Left ventricle myocardium inferior (tissue), 1 donor: ENCODE measurements at regions of chr2 and their contacts with region 1.

Region 1: DNA sequence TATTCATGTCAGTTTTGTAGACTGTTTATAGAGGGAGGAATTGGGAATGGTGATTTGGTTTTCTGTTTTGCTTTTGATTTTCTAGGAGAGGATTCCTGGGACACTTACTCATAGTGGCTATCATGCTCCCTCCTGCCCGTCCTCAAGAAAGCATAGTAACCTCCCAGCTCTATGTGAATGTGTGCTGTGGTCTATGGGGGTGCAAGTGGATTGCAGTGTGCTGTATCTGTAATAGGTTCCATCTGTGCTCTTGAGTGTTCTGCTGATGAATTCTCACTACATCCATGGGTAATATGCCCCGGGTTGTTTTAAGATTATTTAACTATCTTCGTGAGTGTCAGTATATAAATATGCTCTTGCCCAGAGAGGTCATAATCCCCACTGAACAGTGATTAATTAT is 811.3 kb downstream of the CNTNAP5 start:
- DNase-seq: no peak
- H3K4me3 ChIP-seq: no peak overlapping the region
- H3K27ac ChIP-seq: no peak overlapping the region
- H3K4me1 ChIP-seq: no peaks in the 10 kb centered on the region
- H3K27me3 ChIP-seq: no peaks in the 10 kb centered on the region
- CTCF ChIP-seq: no peak

Region 2: DNA sequence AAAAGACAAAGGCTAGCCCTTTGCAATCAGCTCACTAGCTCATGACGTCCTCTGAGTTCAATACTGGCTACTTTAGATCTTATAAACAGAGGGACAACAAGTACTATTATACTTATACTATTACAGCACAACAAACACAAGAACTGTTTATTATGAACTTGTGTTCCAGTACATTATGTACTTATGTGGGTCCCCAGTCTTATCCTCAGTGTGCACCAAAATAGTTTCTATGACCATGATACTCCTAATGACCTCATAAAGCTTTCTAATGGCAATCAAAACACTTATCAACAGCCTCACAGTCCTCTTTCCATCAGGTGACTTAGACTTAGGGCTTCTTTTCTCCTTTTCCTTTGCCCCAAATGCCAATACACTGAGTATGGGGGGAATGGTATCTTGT is 196.9 kb before region 1 on chr2:
- intact Hi-C with region 1: loop called (anchors 10 kb)
- DNase-seq: no peak
- H3K4me3 ChIP-seq: no peak overlapping the region
- H3K27ac ChIP-seq: no peak overlapping the region
- H3K4me1 ChIP-seq: no peaks in the 10 kb centered on the region
- H3K27me3 ChIP-seq: no peaks in the 10 kb centered on the region
- CTCF ChIP-seq: no peak

Region 3: GRCh38 chr2:125004091-125004800 is 167.8 kb after region 1 on chr2:
- intact Hi-C with region 1: no loop called
- DNase-seq: no peak
- H3K4me3 ChIP-seq: no peak overlapping the region
- H3K27ac ChIP-seq: no peak overlapping the region
- H3K4me1 ChIP-seq: no peaks in the 10 kb centered on the region
- H3K27me3 ChIP-seq: no peaks in the 10 kb centered on the region
- CTCF ChIP-seq: no peak